Dendritic cell treated with granulocyte-macrophage colony-stimulating factor and Interleukin-4, amounts not matched to agents 40 ng/mL and 50 ng/mL, for 4 days (primary cell): ENCODE measurements at regions of chr14 and their contacts with region 1.

Region 1: GRCh38 chr14:52748647-52749292 is 18.8 kb downstream of the STYX start:
- H3K4me3 Mint-ChIP-seq: no peak overlapping the region
- H3K27ac Mint-ChIP-seq: no peak overlapping the region
- H3K4me1 Mint-ChIP-seq: no peaks in the 10 kb centered on the region
- H3K27me3 Mint-ChIP-seq: no peaks in the 10 kb centered on the region

Region 2: DNA sequence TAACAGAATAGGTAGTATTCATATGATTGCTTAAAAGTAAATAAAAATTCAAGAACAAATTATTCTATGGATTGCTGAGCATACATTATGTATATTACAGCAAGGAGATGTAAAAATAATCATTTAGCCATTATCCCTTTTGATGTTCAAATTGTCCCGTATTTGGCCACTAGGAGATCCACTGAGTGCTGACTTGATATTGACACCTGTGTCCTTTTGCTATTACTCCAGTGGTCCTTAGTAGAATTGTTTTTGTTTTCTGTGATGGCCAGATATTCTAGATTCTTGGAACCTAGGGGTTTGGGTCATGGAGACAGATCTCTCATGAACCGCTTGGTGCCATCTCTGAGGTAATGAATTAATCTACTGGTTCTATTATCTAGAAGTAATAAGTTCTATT is 70.2 kb before region 1 on chr14:
- intact Hi-C with region 1: no loop called
- H3K4me3 Mint-ChIP-seq: no peak overlapping the region
- H3K27ac Mint-ChIP-seq: no peak overlapping the region
- H3K4me1 Mint-ChIP-seq: no peaks in the 10 kb centered on the region
- H3K27me3 Mint-ChIP-seq: no peaks in the 10 kb centered on the region

Region 3: GRCh38 chr14:52791203-52792096 is 42.7 kb after region 1 on chr14 and contains the start of gene GNPNAT1:
- intact Hi-C with region 1: loop called (anchors 5 kb)
- H3K4me3 Mint-ChIP-seq: peak within 1 kb of the TSS; percentile 84
- H3K27ac Mint-ChIP-seq: peak within 1 kb of the TSS; percentile 90
- H3K4me1 Mint-ChIP-seq: peaks cover 28% of the 10 kb centered on the region
- H3K27me3 Mint-ChIP-seq: no peaks in the 10 kb centered on the region